Activated naive CD8-positive, alpha-beta T cell treated with anti-CD3 and anti-CD28 coated beads, Interleukin-2, amount 10 ng/mL, durations not matched to agents 7 days and 5 days (primary cell): ENCODE measurements at regions of chr6 and their contacts with region 1.

Region 1: GRCh38 chr6:89829591-89830385 is at the start of gene CASP8AP2:
- DNase-seq: peak; percentile 84
- ATAC-seq: peak; percentile 96
- H3K4me3 Mint-ChIP-seq: peak within 1 kb of the TSS; percentile 99
- H3K27ac Mint-ChIP-seq: peak within 1 kb of the TSS; percentile 99
- H3K4me1 Mint-ChIP-seq: peaks cover 26% of the 10 kb centered on the region
- H3K27me3 Mint-ChIP-seq: no peaks in the 10 kb centered on the region
- total RNA-seq, gene CASP8AP2: 49.1 TPM

Region 2: DNA sequence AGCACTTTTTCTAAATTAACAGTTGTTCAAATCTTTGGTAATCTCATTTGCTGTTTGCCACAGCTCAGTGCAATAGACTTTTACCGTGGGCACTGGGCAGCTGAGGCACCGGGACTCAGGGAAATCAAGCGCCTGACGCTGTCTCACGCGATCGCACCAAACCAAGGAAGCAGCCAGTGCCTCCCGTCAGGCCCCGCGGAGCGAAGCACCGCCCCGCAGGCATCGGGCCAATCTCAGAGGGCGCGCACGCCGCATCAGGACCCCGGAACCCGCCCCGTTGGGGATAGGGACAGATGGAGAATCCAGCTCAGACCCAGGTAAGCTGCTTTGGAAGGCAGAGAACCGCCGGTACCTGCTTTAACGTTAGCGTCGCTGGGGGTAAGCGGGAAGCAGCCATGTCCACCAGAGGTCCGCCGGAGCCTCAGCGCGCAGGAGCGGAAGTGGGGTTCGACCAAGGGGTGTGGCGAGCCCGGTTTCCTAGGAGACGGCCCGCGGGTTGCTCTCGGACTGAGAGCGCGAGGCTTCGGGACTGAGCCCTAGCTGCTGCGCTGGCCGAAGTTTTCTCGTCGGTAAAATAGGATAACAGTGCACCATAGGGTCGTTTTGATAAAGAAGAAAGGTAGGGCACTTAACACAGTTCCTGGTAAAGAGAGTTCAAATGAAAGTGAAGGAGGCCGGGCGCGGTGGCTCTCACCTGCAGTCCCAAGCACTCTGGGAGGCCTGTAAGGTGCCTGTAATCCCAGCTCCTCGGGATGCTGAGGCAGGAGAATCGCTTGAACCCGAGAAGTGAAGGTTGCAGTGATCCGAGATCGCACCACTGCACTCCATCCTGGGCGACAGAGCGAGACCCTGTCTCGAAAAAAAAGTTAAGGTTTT is 191.2 kb before region 1 on chr6 and contains the start of gene LYRM2:
- POLR2A ChIA-PET with region 1: interaction called, 10 read pairs
- DNase-seq: peak; percentile 93
- ATAC-seq: peak; percentile 98
- H3K4me3 Mint-ChIP-seq: peak within 1 kb of the TSS; percentile 92
- H3K27ac Mint-ChIP-seq: peak within 1 kb of the TSS; percentile 95
- H3K4me1 Mint-ChIP-seq: peaks cover 24% of the 10 kb centered on the region
- H3K27me3 Mint-ChIP-seq: no peaks in the 10 kb centered on the region
- total RNA-seq, gene LYRM2: 32.0 to 36.8 TPM

Region 3: DNA sequence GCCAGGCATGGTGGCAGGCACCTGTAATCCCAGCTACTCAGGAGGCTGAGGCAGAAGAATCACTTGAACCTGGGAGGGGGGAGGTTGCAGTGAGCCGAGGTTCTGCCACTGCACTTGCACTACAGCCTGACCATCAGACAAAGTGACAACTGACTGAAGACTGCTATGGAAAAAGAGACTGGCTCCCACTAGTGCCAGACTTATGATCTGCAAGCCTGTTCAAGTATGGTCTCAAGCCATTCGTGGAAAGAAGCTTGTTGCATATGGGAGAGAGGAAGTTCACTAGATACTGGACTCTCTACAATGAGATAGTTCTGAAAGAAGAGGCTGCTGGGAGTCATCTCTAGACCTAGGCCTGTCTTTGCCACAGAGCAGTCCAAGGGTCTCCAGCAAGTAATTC is 36.9 kb before region 1 on chr6:
- POLR2A ChIA-PET with region 1: interaction called, 12 read pairs
- DNase-seq: no peak
- ATAC-seq: peak; percentile 75
- H3K4me3 Mint-ChIP-seq: peak overlapping the region; percentile 87
- H3K27ac Mint-ChIP-seq: peak overlapping the region; percentile 98
- H3K4me1 Mint-ChIP-seq: peaks cover 33% of the 10 kb centered on the region
- H3K27me3 Mint-ChIP-seq: no peaks in the 10 kb centered on the region

Region 4: DNA sequence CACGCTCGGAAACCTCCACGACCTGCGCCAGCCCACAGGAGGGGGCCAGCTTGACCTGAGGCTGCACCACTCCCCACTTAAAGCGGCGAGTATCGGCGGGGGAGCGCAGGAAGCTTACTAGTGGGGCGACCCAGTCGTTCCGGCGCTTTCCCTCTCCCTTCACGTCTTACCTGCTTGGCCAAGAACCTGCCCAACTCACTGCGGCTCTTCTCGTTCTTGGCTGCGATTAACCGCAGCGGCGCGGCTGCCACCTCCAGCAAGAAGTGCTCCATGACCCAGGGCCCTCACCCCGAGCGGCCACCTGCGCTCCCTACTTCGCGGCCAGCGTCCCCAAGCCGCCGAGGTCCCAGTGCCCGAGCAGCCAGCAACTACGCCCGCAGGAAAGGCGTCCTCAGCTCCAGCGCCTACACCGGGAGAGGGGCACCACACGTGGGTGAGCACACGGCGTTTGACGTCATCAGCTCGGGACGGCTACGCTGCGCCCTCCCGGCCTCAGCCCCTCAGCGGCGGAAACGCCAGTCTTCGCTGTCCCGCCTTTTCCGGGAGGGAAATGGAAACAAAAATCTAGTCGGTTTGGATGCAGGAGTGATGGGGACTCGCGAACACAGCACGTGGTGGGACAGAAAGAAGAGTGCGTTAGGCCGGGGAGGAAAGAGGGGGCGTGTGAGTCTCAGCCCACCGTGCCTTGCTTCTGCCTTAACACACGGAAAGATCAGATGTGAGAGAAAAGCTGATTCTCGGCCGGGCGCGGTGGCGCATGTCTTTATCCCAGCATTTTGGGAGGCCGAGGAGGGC is 10.3 kb before region 1 on chr6 and contains the start of gene MDN1:
- POLR2A ChIA-PET with region 1: interaction called, 85 read pairs
- DNase-seq: peak; percentile 88
- ATAC-seq: peak; percentile 96
- H3K4me3 Mint-ChIP-seq: peak within 1 kb of the TSS; percentile 94
- H3K27ac Mint-ChIP-seq: peak within 1 kb of the TSS; percentile 98
- H3K4me1 Mint-ChIP-seq: peaks cover 22% of the 10 kb centered on the region
- H3K27me3 Mint-ChIP-seq: no peaks in the 10 kb centered on the region
- total RNA-seq, gene MDN1: 57.7 to 58.2 TPM